ENCODE measurements at regions of chr7 and their contacts with region 1.

Region 1: DNA sequence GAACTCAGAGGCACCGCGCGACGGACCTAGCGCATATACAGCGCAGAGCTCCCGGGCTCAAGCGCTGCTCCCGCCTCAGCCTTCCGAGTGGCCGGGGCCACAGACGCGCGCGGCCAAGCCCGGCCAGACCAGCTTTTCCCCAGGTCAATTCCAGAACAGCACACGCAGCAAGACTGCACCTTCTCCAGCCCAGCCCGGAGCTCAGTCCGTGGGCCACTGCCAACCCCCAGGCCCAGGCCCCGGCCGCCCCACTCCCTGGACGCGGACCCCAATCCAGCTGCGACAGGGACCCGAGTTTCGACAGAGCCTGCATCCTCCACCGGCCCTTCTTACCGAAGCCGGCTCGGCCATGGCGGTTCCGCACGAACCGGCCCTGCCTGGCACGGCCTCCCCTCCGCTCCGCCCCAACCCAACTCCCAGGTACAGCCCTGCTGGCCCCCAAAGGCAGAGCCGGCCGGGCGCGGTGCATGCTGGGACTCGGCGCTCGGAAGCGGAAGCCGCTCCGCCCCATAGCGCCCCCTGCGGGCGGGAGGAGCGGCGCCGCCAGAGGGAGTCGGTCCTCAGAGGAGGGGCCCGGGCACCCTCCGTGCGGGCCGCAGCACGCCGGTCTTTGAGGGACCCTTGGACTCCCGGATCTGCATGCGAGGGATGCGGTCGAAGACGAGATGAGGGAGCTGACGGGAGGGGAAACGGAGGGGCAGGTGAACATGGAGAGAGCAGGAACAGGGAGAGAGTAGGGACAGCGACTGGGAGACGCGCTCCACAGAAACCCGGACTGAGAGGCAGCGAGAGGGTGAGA is at the start of gene ZNF425:
- DNase-seq: peak; percentile 82 to 97
- H3K4me3 ChIP-seq: peak within 1 kb of the TSS; percentile 92
- H3K27ac ChIP-seq: peak within 1 kb of the TSS; percentile 64
- H3K4me1 ChIP-seq: peaks cover 17% of the 10 kb centered on the region
- H3K27me3 ChIP-seq: no peaks in the 10 kb centered on the region
- CTCF ChIP-seq: peak; percentile 97
- total RNA-seq, gene ZNF425: 5.2 and 5.9 TPM in 2 replicates

Region 2: GRCh38 chr7:149067876-149068275 is 58.2 kb before region 1 on chr7:
- CTCF ChIA-PET with region 1: no interaction called
- POLR2A ChIA-PET with region 1: no interaction called
- intact Hi-C with region 1: loop called (anchors 1 kb)
- DNase-seq: no peak
- H3K4me3 ChIP-seq: no peak overlapping the region
- H3K27ac ChIP-seq: no peak overlapping the region
- H3K4me1 ChIP-seq: peaks cover 4% of the 10 kb centered on the region; the same call in 1 of the 2 replicates
- H3K27me3 ChIP-seq: no peaks in the 10 kb centered on the region
- CTCF ChIP-seq: peak; percentile 47; the same call in 1 of the 2 replicates

Region 3: DNA sequence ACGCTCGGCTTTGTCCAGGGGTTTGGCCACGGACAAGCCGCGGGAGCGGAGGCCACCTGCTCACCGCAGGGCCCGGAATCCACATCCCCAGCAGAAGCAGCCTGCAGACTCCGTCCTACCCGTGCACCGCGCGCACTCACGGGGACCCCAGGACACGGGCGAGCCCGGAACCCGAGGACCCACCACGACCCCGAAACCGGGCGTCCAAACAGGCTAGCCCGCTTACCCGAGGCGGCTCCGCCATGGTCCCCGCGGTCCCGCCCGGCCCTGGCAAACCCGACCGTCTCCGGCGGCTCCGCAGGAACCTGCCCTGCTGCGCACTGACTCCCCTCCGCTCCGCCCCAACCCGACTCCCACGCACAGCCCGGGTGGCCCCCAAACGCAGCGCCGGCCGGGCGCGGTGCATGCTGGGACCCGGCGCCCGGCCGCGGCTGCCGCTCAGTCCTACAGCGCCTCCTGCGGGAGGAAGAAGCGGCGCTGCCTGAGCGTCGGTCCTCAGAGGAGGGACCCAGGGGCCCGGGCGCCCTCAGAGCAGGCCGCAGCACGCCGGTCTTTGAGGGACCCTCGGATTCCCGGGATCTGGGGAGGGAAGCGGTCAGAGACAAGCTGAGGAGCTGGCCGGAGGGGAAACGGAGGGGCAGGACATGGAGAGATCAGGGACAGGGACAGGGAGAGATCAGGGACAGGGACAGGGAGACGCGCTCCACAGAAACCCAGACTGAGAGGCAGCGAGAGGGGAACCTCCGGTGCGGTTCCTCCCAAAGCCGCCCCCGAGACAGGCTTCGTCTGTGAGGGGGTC is 35.5 kb before region 1 on chr7 and contains the start of gene ZNF786:
- CTCF ChIA-PET with region 1: no interaction called
- POLR2A ChIA-PET with region 1: no interaction called
- intact Hi-C with region 1: loop called (anchors 1 kb)
- DNase-seq: peak; percentile 71 to 87
- H3K4me3 ChIP-seq: peak within 1 kb of the TSS; percentile 96
- H3K27ac ChIP-seq: peak within 1 kb of the TSS; percentile 85
- H3K4me1 ChIP-seq: no peaks in the 10 kb centered on the region; the same call in 1 of the 2 replicates
- H3K27me3 ChIP-seq: no peaks in the 10 kb centered on the region
- CTCF ChIP-seq: peak; percentile 92
- total RNA-seq, gene ZNF786: 7.0 and 8.4 TPM in 2 replicates

Region 4: GRCh38 chr7:149195180-149196150 is 69.4 kb after region 1 on chr7 and contains the start of gene ZNF282:
- CTCF ChIA-PET with region 1: interaction called, 5 read pairs
- POLR2A ChIA-PET with region 1: interaction called, 14 read pairs
- intact Hi-C with region 1: loop called (anchors 1 kb)
- DNase-seq: peak; percentile 90 to 94
- H3K4me3 ChIP-seq: peak within 1 kb of the TSS; percentile 91
- H3K27ac ChIP-seq: peak within 1 kb of the TSS; percentile 75
- H3K4me1 ChIP-seq: peaks cover 17% of the 10 kb centered on the region
- H3K27me3 ChIP-seq: no peaks in the 10 kb centered on the region
- CTCF ChIP-seq: peak; percentile 69
- total RNA-seq, gene ZNF282: 32.5 and 35.9 TPM in 2 replicates

Region 5: DNA sequence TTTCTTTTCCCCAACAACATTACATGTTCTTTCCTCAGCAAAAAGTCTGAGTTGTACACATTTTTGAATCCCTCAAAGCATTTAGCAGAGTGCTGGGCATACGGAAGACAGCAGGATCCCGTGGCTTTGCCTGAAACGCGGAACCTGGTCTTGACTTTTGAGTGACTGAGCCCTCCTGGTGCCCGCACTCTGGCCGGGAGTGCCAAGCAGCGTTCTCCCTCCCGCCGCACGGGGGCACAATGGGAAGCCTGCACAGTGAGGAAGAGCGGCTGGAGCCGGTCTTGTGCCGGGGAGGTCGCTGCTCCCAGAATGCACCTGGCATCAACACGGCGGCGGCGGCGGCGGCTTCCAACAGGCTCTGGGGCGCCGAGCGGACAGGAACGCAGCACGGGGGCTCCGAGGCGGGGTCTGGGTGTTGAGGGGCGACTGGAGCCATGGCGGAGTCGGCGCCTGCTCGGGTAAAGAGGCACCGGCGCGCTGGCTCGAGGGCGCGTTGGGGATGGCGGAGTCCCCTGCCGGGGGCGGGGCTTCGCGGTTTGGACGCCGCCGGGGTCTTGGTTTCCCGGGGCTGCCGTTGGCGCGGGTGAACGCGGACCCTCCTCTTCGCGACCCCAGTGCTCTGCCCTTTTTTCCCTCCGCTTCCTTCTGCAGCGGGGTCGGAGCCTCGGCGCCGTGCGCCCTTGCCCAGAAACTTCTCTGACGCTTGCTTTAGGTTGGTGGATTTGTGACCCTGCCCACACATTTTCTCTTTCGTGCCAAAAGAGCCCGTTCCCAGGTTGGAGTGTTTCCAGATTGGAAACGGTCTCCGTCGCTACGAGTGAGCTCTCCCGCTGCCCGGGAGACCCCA is 113.5 kb after region 1 on chr7 and contains the start of gene ZNF212:
- CTCF ChIA-PET with region 1: no interaction called
- POLR2A ChIA-PET with region 1: no interaction called
- intact Hi-C with region 1: loop called (anchors 1 kb)
- DNase-seq: peak; percentile 89 to 97
- H3K4me3 ChIP-seq: peak within 1 kb of the TSS; percentile 95
- H3K27ac ChIP-seq: peak within 1 kb of the TSS; percentile 82
- H3K4me1 ChIP-seq: peaks cover 45% of the 10 kb centered on the region
- H3K27me3 ChIP-seq: no peaks in the 10 kb centered on the region
- CTCF ChIP-seq: peak; percentile 79
- total RNA-seq, gene ZNF212: 16.9 and 22.3 TPM in 2 replicates

Region 6: GRCh38 chr7:149284850-149285626 is 159.0 kb after region 1 on chr7:
- CTCF ChIA-PET with region 1: interaction called, 6 read pairs
- POLR2A ChIA-PET with region 1: no interaction called
- intact Hi-C with region 1: loop called (anchors 1 kb)
- DNase-seq: peak; percentile 90 to 100
- H3K4me3 ChIP-seq: peak overlapping the region; percentile 62
- H3K27ac ChIP-seq: no peak overlapping the region
- H3K4me1 ChIP-seq: peaks cover 25% of the 10 kb centered on the region
- H3K27me3 ChIP-seq: no peaks in the 10 kb centered on the region
- CTCF ChIP-seq: no peak

Region 7: GRCh38 chr7:149355390-149356048 is 229.5 kb after region 1 on chr7:
- CTCF ChIA-PET with region 1: no interaction called
- POLR2A ChIA-PET with region 1: interaction called, 20 read pairs
- intact Hi-C with region 1: no loop called
- DNase-seq: peak; percentile 93 to 95
- H3K4me3 ChIP-seq: peak overlapping the region; percentile 38; the same call in 1 of the 2 replicates
- H3K27ac ChIP-seq: peak overlapping the region; percentile 58
- H3K4me1 ChIP-seq: peaks cover 23% of the 10 kb centered on the region
- H3K27me3 ChIP-seq: no peaks in the 10 kb centered on the region
- CTCF ChIP-seq: peak; percentile 53; the same call in 1 of the 2 replicates

Measured in PC-9 (cell line).